B cell (primary cell): ENCODE measurements at regions of chr16 and their contacts with region 1.

Region 1: GRCh38 chr16:85898521-85899442 is at the start of gene IRF8:
- DNase-seq: peak; percentile 94
- ATAC-seq: peak; percentile 65
- H3K4me3 ChIP-seq: peak within 1 kb of the TSS; percentile 77 to 99 (median 88)
- H3K4me3 Mint-ChIP-seq: peak within 1 kb of the TSS; percentile 92
- H3K27ac ChIP-seq: peak within 1 kb of the TSS; percentile 93 to 97
- H3K27ac Mint-ChIP-seq: peak within 1 kb of the TSS; percentile 98
- H3K4me1 ChIP-seq: peaks cover 41 to 52% of the 10 kb centered on the region in 2 donors
- H3K4me1 Mint-ChIP-seq: peaks cover 63% of the 10 kb centered on the region
- H3K27me3 ChIP-seq: no peaks in the 10 kb centered on the region
- H3K27me3 Mint-ChIP-seq: no peaks in the 10 kb centered on the region
- CTCF ChIP-seq: no peak
- total RNA-seq, gene IRF8: 332 and 337 TPM in 2 replicates

Region 2: DNA sequence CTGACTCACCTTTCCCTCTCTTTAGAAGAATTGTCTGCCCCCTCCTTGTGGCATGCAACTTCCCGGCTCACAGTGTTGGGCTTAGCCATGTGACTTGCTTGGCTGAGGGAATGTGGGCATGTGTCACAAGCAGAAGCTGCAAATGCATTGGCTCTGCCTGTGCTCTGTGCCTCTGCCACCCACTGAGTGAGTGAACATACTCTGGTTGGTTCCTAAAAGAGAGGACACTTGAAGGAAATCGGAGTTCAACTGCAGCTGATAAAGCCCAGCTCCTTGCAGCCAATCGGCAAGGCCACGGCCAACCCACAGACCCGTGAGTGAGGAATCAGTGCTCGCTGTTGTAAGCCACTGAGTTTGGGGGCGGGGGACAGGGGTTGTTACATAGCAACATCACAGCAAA is 199.2 kb before region 1 on chr16:
- CTCF ChIA-PET with region 1: no interaction called
- POLR2A ChIA-PET with region 1: no interaction called
- intact Hi-C with region 1: no loop called
- DNase-seq: no peak
- ATAC-seq: no peak
- H3K4me3 ChIP-seq: no peak overlapping the region
- H3K4me3 Mint-ChIP-seq: no peak overlapping the region
- H3K27ac ChIP-seq: no peak overlapping the region
- H3K27ac Mint-ChIP-seq: no peak overlapping the region
- H3K4me1 ChIP-seq: no peaks in the 10 kb centered on the region
- H3K4me1 Mint-ChIP-seq: no peaks in the 10 kb centered on the region
- H3K27me3 ChIP-seq: no peaks in the 10 kb centered on the region
- H3K27me3 Mint-ChIP-seq: no peaks in the 10 kb centered on the region
- CTCF ChIP-seq: no peak

Region 3: DNA sequence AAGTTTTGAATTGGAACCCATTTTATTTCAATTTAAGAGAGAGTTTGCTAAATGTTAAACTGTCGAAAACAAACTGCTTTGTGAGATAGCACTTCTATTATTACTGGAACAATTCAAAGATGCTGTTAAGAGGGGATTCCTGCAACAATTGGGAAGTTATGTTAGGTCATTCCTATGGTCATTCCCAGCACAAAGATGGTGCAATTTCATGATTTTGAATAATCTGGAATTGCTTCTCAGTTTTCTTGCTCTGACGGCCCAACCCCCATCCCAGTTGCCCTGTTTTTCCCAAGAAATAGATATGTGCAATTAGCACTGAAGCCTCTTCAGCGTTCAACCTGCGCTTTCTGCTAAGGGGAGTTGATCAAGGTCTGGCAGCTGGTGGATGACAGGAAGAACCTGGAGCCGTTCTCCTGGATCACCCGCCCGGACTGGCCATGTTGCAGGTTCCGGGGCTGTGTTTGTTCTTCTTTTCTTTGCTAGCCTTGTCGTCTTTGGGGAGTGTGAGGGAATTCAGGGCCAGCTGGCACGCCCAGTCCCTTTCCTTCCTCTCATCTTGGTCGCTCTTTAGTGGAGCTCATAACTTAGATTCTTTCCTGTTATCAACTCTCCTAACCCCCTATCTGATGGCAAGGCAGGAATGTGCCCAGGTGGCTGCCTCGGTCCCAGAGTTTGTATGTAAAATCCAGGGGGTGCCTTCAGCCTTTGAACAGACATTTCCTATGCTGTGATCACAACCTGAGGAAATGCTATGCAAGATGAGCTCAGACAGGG is 28.8 kb before region 1 on chr16:
- CTCF ChIA-PET with region 1: interaction called, 8 read pairs
- POLR2A ChIA-PET with region 1: interaction called, 11 read pairs
- intact Hi-C with region 1: loop called (anchors 2 kb)
- DNase-seq: no peak
- ATAC-seq: no peak
- H3K4me3 ChIP-seq: peak overlapping the region in 2 of 5 experiments; percentile 3 to 28
- H3K4me3 Mint-ChIP-seq: peak overlapping the region; percentile 59
- H3K27ac ChIP-seq: peak overlapping the region; percentile 33 to 74
- H3K27ac Mint-ChIP-seq: peak overlapping the region; percentile 84
- H3K4me1 ChIP-seq: peaks cover 53 to 66% of the 10 kb centered on the region in 2 donors
- H3K4me1 Mint-ChIP-seq: peaks cover 78% of the 10 kb centered on the region
- H3K27me3 ChIP-seq: no peaks in the 10 kb centered on the region
- H3K27me3 Mint-ChIP-seq: no peaks in the 10 kb centered on the region
- CTCF ChIP-seq: no peak

Region 4: DNA sequence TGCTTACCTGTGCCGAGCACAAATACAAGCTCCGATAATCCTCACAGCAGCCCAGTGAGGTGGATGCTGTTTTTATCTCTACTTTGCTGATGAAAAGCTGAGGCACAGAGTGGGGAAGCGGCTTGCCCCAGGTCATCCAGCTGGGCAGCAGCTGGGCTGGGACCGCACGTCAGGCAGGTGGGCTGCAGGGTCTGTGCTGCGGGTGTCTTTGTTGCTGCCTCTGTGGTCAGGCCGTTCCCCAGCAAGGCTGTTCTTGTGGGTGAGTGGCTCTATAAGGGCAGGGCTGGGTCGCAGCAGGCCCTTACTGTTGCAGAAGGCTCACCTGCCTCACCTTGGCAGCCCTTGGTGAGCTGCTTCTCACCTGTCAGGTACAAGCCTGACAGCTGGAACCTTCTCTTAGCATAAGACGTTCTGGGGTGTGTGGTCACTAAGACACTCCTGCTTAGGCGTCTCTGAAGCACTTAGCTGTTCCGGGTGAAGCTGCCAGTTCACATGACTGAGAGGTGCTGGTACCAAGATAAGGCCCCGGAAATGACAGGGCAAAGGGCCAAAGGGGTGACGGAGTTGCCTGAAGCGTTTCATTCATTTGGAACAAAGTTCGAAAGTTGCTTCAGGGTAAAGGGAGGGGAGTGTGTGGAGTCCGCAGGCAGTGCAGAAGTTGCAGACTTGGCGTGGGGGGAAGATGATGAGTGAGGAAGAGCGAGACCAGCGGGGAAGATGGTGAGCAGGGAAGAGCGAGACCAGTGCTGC is 17.5 kb after region 1 on chr16:
- CTCF ChIA-PET with region 1: interaction called, 28 read pairs
- POLR2A ChIA-PET with region 1: interaction called, 8 read pairs
- intact Hi-C with region 1: loop called (anchors 2 kb)
- DNase-seq: no peak
- ATAC-seq: peak; percentile 32
- H3K4me3 ChIP-seq: no peak overlapping the region
- H3K4me3 Mint-ChIP-seq: peak overlapping the region; percentile 75
- H3K27ac ChIP-seq: peak overlapping the region; percentile 3 to 59
- H3K27ac Mint-ChIP-seq: peak overlapping the region; percentile 82
- H3K4me1 ChIP-seq: peaks cover 76 to 81% of the 10 kb centered on the region in 2 donors
- H3K4me1 Mint-ChIP-seq: peaks cover 77% of the 10 kb centered on the region
- H3K27me3 ChIP-seq: no peaks in the 10 kb centered on the region
- H3K27me3 Mint-ChIP-seq: no peaks in the 10 kb centered on the region
- CTCF ChIP-seq: no peak

Region 5: GRCh38 chr16:85947230-85948137 is 48.7 kb after region 1 on chr16:
- CTCF ChIA-PET with region 1: interaction called, 5 read pairs
- POLR2A ChIA-PET with region 1: interaction called, 4 read pairs
- intact Hi-C with region 1: loop called (anchors 1 kb)
- DNase-seq: peak; percentile 87
- ATAC-seq: peak; percentile 63
- H3K4me3 ChIP-seq: peak overlapping the region; percentile 41 to 68 (median 64)
- H3K4me3 Mint-ChIP-seq: peak overlapping the region; percentile 94
- H3K27ac ChIP-seq: peak overlapping the region; percentile 88 to 92
- H3K27ac Mint-ChIP-seq: peak overlapping the region; percentile 98
- H3K4me1 ChIP-seq: peaks cover 70 to 79% of the 10 kb centered on the region in 2 donors
- H3K4me1 Mint-ChIP-seq: peaks cover 84% of the 10 kb centered on the region
- H3K27me3 ChIP-seq: no peaks in the 10 kb centered on the region
- H3K27me3 Mint-ChIP-seq: no peaks in the 10 kb centered on the region
- CTCF ChIP-seq: no peak

Region 6: DNA sequence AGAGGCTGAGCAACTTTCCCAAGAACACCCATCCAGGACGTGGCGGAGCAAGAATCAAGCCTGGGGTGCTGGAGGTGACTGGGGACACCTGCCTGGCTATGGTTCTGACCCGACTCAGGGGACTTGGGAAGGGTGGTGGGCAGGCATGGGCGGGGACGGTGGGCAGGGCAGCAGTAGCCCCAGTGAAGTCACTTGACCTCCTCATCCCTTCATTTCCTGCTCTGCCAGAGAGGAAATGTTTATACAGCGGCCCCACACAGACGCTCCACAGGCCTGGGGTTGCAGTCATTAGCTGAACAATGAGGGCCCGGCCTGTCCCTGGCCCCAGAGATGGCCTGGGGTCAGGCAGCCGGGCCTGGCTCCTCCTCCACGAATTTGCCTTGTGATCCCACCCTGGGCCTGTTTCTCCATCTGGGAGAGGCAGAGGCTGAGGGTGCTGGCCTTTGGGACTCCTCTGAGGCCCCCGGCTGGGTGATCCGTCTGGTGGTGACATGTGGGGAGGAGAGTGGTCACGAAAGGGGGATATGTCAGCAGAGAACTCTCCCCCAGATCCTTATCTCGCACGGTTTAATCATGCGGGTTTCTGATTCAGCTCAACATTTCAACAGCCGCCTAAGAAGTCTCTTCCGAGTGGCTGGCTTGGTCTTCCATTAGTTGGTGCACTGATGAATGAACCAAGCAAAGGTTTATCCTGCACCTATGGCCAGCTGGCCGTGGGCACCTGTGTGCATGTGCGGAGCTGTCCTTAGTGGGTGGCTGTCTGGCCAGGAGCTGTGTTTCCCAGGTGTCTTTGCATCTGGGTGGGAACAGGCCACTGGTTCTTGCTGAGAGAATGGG is 176.1 kb after region 1 on chr16:
- CTCF ChIA-PET with region 1: no interaction called
- POLR2A ChIA-PET with region 1: no interaction called
- intact Hi-C with region 1: no loop called
- DNase-seq: no peak
- ATAC-seq: no peak
- H3K4me3 ChIP-seq: no peak overlapping the region
- H3K4me3 Mint-ChIP-seq: no peak overlapping the region
- H3K27ac ChIP-seq: no peak overlapping the region
- H3K27ac Mint-ChIP-seq: no peak overlapping the region
- H3K4me1 ChIP-seq: no peaks in the 10 kb centered on the region
- H3K4me1 Mint-ChIP-seq: no peaks in the 10 kb centered on the region
- H3K27me3 ChIP-seq: peaks cover 0 to 30% (median 2%) of the 10 kb centered on the region in 4 experiments
- H3K27me3 Mint-ChIP-seq: peaks cover 32% of the 10 kb centered on the region
- CTCF ChIP-seq: no peak